ENCODE measurements at regions of chr11 and their contacts with region 1.

Region 1: GRCh38 chr11:74726547-74727182 is 4.6 kb downstream of the CHRDL2 start:
- DNase-seq: peak; percentile 76 to 86
- ATAC-seq: peak; percentile 87
- H3K4me3 ChIP-seq: no peak overlapping the region
- H3K27ac ChIP-seq: no peak overlapping the region
- H3K4me1 ChIP-seq: no peaks in the 10 kb centered on the region
- H3K27me3 ChIP-seq: no peaks in the 10 kb centered on the region

Region 2: DNA sequence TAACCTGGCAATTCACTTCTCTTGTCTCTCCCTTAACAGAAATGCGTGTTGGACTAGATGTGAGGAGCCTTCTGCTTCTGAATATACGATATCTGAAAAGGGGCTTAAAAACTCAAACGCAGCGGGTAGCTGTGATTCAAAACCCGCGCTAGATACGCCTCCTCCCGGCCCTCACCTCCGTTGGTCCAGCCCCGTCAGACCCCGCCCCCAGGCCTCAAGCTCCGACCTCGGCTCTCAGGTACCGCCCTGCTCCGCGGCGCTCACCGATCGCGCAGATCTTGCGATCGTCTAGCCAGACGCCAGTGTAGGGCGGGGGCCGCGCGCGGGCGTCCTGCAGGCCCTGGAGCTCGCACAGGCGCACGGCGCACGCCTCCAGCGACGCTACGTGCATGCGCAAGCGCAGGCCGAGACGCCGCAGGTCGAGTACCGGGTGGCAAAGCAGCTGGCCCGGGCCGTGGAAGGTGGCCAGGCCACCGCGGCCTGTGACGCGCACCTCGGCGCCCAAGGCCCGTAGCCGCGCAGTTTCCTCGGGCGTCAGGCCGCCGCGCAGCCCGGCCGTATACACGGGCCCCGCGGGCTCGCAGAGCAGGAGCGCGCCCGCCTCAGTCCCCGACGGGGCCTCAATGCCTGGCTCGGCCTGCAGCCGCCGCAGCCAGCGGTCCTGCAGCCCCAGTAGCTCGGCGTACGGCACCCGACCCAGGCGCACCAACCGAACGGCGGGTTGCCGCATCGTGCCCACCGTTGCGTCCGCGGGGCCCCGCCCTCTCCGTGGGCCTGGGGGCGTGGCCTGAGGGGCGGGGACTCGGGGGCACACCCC is 233.5 kb before region 1 on chr11 and contains the start of gene LIPT2:
- intact Hi-C with region 1: loop called in 1 of 2 experiments (anchors 10 kb)
- DNase-seq: peak; percentile 98
- ATAC-seq: peak; percentile 99
- H3K4me3 ChIP-seq: peak within 1 kb of the TSS; percentile 72 to 79
- H3K27ac ChIP-seq: peak within 1 kb of the TSS; percentile 91 to 98
- H3K4me1 ChIP-seq: peaks cover 0 to 2% of the 10 kb centered on the region in 2 donors
- H3K27me3 ChIP-seq: no peaks in the 10 kb centered on the region
- total RNA-seq, gene LIPT2: 1.0 to 1.8 TPM

Region 3: GRCh38 chr11:74532501-74533246 is 194.0 kb before region 1 on chr11:
- intact Hi-C with region 1: no loop called
- DNase-seq: no peak
- ATAC-seq: no peak
- H3K4me3 ChIP-seq: no peak overlapping the region
- H3K27ac ChIP-seq: no peak overlapping the region
- H3K4me1 ChIP-seq: no peaks in the 10 kb centered on the region
- H3K27me3 ChIP-seq: no peaks in the 10 kb centered on the region

Region 4: DNA sequence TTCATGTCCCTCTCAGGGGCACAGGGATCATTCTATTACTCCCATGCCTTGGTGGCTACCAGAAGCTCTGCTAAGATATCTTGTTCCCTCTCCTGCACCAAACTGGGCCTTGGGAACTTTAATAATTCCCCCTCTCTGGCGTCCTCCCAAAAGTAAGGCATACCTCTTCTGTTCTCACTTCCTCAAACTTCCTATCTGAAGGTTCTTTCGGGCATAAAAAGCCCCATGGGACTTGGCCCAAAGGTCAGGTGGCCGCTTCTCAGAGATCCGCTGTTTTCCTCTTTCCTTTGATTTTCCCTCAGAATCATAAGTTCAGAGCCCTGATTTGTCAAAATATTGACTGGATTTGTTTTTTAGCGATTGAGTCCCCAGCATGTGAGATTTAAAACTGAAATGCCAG is 121.3 kb before region 1 on chr11:
- intact Hi-C with region 1: loop called in 1 of 2 experiments (anchors 5 kb)
- DNase-seq: no peak
- ATAC-seq: no peak
- H3K4me3 ChIP-seq: no peak overlapping the region
- H3K27ac ChIP-seq: no peak overlapping the region
- H3K4me1 ChIP-seq: no peaks in the 10 kb centered on the region
- H3K27me3 ChIP-seq: no peaks in the 10 kb centered on the region

Region 5: DNA sequence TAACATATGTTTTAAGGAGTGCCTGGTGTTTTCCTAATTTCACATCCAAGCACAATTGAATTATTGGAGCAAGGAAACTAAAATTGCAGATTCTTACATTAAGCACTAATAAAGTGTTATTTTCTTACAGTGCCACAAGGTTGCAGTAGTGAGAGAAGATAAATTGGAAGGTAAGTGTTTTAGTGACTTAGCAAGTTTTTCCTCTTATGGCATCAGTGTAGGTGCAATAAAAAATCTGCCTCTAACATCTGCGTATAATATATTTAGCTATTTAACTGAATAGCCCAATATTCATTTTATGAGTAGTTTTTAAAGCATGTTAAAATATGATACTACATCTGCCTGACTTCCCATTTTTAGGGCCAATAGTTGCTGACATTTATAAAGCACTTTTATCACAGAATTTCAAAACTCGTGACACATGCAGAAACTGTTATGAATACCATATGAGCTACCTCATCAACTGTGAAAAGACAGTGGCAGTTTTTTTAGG is 115.2 kb before region 1 on chr11:
- intact Hi-C with region 1: loop called (anchors 1 to 5 kb)
- DNase-seq: no peak
- ATAC-seq: no peak
- H3K4me3 ChIP-seq: no peak overlapping the region
- H3K27ac ChIP-seq: no peak overlapping the region
- H3K4me1 ChIP-seq: no peaks in the 10 kb centered on the region
- H3K27me3 ChIP-seq: no peaks in the 10 kb centered on the region

Region 6: DNA sequence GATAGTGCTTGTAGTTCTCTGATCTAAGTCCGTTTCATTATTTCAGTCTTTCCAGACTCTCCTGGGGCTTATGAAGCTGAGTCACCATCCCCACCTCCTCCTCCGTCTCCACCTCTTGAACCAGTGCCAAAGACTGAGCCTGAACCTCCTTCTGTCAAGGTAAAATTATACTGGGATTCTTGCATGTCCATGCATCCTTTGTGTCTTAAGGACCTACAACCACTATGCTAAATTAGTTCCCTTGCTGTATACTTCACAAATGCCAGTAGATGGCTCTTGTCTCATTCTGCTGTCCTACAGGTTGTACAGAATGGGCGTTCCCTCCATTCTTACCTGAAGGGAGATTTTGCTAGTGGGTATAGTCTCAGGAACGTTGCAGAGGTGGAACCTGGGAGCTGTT is 92.1 kb before region 1 on chr11:
- intact Hi-C with region 1: loop called in 1 of 2 experiments (anchors 10 kb)
- DNase-seq: no peak
- ATAC-seq: no peak
- H3K4me3 ChIP-seq: no peak overlapping the region
- H3K27ac ChIP-seq: no peak overlapping the region
- H3K4me1 ChIP-seq: peaks cover 0 to 2% of the 10 kb centered on the region in 2 donors
- H3K27me3 ChIP-seq: no peaks in the 10 kb centered on the region

Region 7: GRCh38 chr11:74702383-74703007 is 24.2 kb before region 1 on chr11:
- intact Hi-C with region 1: loop called (anchors 2 kb)
- DNase-seq: peak in 1 of 2 donors; percentile 76
- ATAC-seq: peak; percentile 76
- H3K4me3 ChIP-seq: no peak overlapping the region
- H3K27ac ChIP-seq: no peak overlapping the region
- H3K4me1 ChIP-seq: no peaks in the 10 kb centered on the region
- H3K27me3 ChIP-seq: no peaks in the 10 kb centered on the region

Measured in aorta (tissue), 5 donors.